Common myeloid progenitor, CD34-positive (primary cell): ENCODE measurements at regions of chr3 and their contacts with region 1.

Region 1: GRCh38 chr3:15205934-15206661 is at the start of gene CAPN7:
- DNase-seq: peak; percentile 96 to 98 (median 97)
- H3K4me3 ChIP-seq: peak within 1 kb of the TSS; percentile 82 to 97 (median 93)
- H3K27ac ChIP-seq: peak within 1 kb of the TSS; percentile 86 to 90
- H3K4me1 ChIP-seq: peaks cover 8 to 22% (median 15%) of the 10 kb centered on the region in 4 experiments
- H3K27me3 ChIP-seq: no peaks in the 10 kb centered on the region

Region 2: DNA sequence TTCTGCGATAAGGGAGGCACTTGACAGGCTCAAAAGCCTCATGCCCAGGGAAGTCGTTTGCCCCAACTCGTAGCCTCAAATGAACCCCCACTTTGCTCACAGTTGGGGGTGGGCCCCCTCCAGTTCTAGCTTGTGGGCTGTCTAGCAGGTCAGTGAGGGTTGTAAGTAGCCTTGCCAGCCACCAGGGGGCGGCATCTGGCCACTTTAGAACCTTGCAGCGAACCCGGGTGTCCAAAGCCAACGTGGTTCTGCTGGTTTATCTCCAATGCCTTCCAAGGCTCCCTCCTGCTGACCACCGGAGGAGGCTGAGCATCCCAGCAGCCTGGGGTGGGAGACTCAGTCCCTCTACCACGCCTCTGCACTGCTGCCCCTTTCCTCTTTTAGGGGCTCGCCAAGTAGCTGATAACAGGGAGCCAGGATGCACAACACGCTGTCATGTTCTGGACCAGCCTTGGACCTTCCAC is 98.0 kb before region 1 on chr3:
- CTCF ChIA-PET with region 1: interaction called, 29 read pairs
- POLR2A ChIA-PET with region 1: no interaction called
- DNase-seq: peak; percentile 80 to 87 (median 85)
- H3K4me3 ChIP-seq: peak overlapping the region in 4 of 7 experiments; percentile 25 to 57 (median 30)
- H3K27ac ChIP-seq: no peak overlapping the region
- H3K4me1 ChIP-seq: peaks cover 0 to 5% (median 4%) of the 10 kb centered on the region in 4 experiments
- H3K27me3 ChIP-seq: no peaks in the 10 kb centered on the region

Region 3: GRCh38 chr3:15120986-15121385 is 85.1 kb before region 1 on chr3:
- CTCF ChIA-PET with region 1: interaction called, 27 read pairs
- POLR2A ChIA-PET with region 1: no interaction called
- DNase-seq: no peak
- H3K4me3 ChIP-seq: no peak overlapping the region
- H3K27ac ChIP-seq: no peak overlapping the region
- H3K4me1 ChIP-seq: peaks cover 0 to 2% (median 0%) of the 10 kb centered on the region in 4 experiments
- H3K27me3 ChIP-seq: peaks cover 0 to 2% (median 0%) of the 10 kb centered on the region in 5 experiments

Region 4: DNA sequence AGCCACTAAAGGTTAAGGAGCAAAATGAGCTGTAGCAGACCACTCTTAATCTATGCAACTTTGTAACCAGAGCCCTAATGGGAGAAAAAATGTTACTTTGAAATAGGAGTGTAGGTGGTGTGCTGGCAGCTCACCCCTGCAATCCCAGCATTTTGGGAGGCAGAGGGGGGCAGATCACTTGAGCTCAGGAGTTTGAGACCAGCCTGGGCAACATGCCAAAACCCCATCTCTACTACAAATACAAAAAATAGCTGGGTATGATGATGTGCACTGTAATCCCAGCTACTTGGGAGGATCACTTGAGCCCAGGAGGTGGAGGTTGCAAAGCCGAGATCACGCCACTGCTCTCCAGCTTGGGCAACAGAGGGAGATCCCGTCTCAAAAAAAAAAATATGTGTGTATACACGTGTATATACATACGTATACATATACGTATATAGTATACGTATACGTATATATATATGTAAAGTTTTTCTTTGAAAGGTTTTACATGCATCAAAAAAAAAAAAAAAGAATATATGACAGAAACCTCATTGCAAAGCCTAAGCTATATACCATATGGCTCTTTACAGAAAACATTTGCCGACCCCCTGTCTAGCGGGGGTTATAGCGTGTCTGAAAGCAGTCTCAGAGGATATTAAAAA is 15.6 kb after region 1 on chr3:
- CTCF ChIA-PET with region 1: interaction called, 10 read pairs
- POLR2A ChIA-PET with region 1: no interaction called
- DNase-seq: no peak
- H3K4me3 ChIP-seq: no peak overlapping the region
- H3K27ac ChIP-seq: no peak overlapping the region
- H3K4me1 ChIP-seq: no peaks in the 10 kb centered on the region
- H3K27me3 ChIP-seq: no peaks in the 10 kb centered on the region

Region 5: GRCh38 chr3:15405448-15406050 is 199.5 kb after region 1 on chr3:
- CTCF ChIA-PET with region 1: interaction called, 26 read pairs
- POLR2A ChIA-PET with region 1: no interaction called
- DNase-seq: peak; percentile 75 to 89 (median 85)
- H3K4me3 ChIP-seq: no peak overlapping the region
- H3K27ac ChIP-seq: no peak overlapping the region
- H3K4me1 ChIP-seq: peaks cover 0 to 2% (median 0%) of the 10 kb centered on the region in 4 experiments
- H3K27me3 ChIP-seq: no peaks in the 10 kb centered on the region